CD4-positive, alpha-beta memory T cell (primary cell): ENCODE measurements at regions of chr6 and their contacts with region 1.

Region 1: GRCh38 chr6:31702819-31703522 is at the start of gene ABHD16A:
- DNase-seq: peak; percentile 96 to 98 (median 97)
- H3K4me3 ChIP-seq: peak within 1 kb of the TSS; percentile 70 to 82
- H3K4me3 Mint-ChIP-seq: peak within 1 kb of the TSS; percentile 97 to 99 (median 98)
- H3K27ac ChIP-seq: peak within 1 kb of the TSS; percentile 97
- H3K27ac Mint-ChIP-seq: peak within 1 kb of the TSS; percentile 93 to 99 (median 98)
- H3K4me1 ChIP-seq: peaks cover 28% of the 10 kb centered on the region
- H3K4me1 Mint-ChIP-seq: peaks cover 21 to 44% (median 34%) of the 10 kb centered on the region in 4 donors
- H3K27me3 ChIP-seq: no peaks in the 10 kb centered on the region
- H3K27me3 Mint-ChIP-seq: no peaks in the 10 kb centered on the region
- total RNA-seq, gene ABHD16A: 66.0 to 69.2 TPM

Region 2: GRCh38 chr6:31441365-31442267 is 261.4 kb before region 1 on chr6:
- CTCF ChIA-PET with region 1: no interaction called
- POLR2A ChIA-PET with region 1: no interaction called
- intact Hi-C with region 1: no loop called
- DNase-seq: peak; percentile 68 to 78 (median 75)
- H3K4me3 ChIP-seq: no peak overlapping the region
- H3K4me3 Mint-ChIP-seq: peak overlapping the region in 1 of 8 donors; percentile 33
- H3K27ac ChIP-seq: no peak overlapping the region
- H3K27ac Mint-ChIP-seq: peak overlapping the region in 2 of 7 donors; percentile 42 to 48
- H3K4me1 ChIP-seq: peaks cover 7% of the 10 kb centered on the region
- H3K4me1 Mint-ChIP-seq: peaks cover 0 to 8% (median under 1%) of the 10 kb centered on the region in 4 donors
- H3K27me3 ChIP-seq: peaks cover under 1% of the 10 kb centered on the region
- H3K27me3 Mint-ChIP-seq: peaks cover 25 to 27% of the 10 kb centered on the region in 2 donors

Region 3: DNA sequence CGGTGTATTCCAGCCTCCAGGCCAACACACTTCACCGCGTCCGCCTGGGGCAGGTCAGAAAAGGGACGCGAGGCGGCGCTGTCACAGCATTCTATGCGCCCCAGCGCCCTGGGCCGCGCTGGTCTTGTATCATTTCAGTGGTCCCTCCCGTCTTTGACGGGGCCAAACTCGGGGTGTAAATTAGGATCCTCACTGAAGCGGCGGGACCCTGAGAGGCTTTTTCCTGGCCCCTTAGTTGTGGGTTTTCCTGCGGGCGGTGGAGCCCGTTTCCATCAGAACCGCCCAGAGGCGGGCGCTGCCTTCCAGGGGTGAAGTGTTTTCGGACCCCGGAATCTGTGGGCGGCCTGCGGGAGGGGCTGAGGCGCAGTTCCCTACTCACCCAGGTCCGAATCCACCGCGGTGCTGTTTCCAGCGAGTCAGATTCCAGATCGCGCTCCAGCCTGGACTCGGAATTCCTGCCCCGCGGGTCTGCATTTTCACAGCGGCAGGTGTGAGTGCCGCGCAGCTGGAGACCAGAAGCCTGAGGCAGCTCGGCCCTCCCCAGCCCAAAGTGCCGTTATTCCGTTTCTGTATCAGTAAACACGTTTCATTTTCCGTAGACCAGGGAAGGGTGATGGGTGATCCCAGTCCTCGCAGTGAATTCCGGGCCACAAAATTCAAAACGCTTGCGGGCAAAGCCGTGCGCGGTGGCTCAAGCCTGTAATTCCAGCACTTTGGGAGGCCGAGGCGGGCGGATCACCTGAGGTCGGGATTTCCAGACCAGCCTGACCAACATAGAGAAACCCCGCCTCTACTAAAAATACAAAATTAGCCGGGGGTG is 208.9 kb before region 1 on chr6:
- CTCF ChIA-PET with region 1: no interaction called
- POLR2A ChIA-PET with region 1: no interaction called
- intact Hi-C with region 1: no loop called
- DNase-seq: peak; percentile 56 to 76 (median 73)
- H3K4me3 ChIP-seq: peak overlapping the region; percentile 71 to 91
- H3K4me3 Mint-ChIP-seq: peak overlapping the region; percentile 85 to 98 (median 91)
- H3K27ac ChIP-seq: peak overlapping the region; percentile 77
- H3K27ac Mint-ChIP-seq: peak overlapping the region; percentile 87 to 96 (median 95)
- H3K4me1 ChIP-seq: peaks cover 63% of the 10 kb centered on the region
- H3K4me1 Mint-ChIP-seq: peaks cover 35 to 69% (median 50%) of the 10 kb centered on the region in 4 donors
- H3K27me3 ChIP-seq: no peaks in the 10 kb centered on the region
- H3K27me3 Mint-ChIP-seq: no peaks in the 10 kb centered on the region

Region 4: GRCh38 chr6:31546962-31547726 is 155.8 kb before region 1 on chr6 and contains the start of gene NFKBIL1:
- CTCF ChIA-PET with region 1: no interaction called
- POLR2A ChIA-PET with region 1: interaction called, 3 read pairs
- intact Hi-C with region 1: loop called (anchors 1 kb)
- DNase-seq: peak; percentile 83 to 91 (median 85)
- H3K4me3 ChIP-seq: peak within 1 kb of the TSS; percentile 55 to 79
- H3K4me3 Mint-ChIP-seq: peak within 1 kb of the TSS; percentile 85 to 93 (median 88)
- H3K27ac ChIP-seq: peak within 1 kb of the TSS; percentile 85
- H3K27ac Mint-ChIP-seq: peak within 1 kb of the TSS; percentile 93 to 99 (median 97)
- H3K4me1 ChIP-seq: peaks cover 45% of the 10 kb centered on the region
- H3K4me1 Mint-ChIP-seq: peaks cover 24 to 49% (median 36%) of the 10 kb centered on the region in 4 donors
- H3K27me3 ChIP-seq: no peaks in the 10 kb centered on the region
- H3K27me3 Mint-ChIP-seq: no peaks in the 10 kb centered on the region
- total RNA-seq, gene NFKBIL1: 9.8 to 13.3 TPM

Region 5: GRCh38 chr6:31680840-31681671 is 21.9 kb before region 1 on chr6 and contains the start of gene LY6G5C:
- CTCF ChIA-PET with region 1: interaction called, 4 read pairs
- POLR2A ChIA-PET with region 1: interaction called, 13 read pairs
- intact Hi-C with region 1: loop called (anchors 2 kb)
- DNase-seq: peak in 4 of 5 donors; percentile 51 to 59 (median 56)
- H3K4me3 ChIP-seq: peak within 1 kb of the TSS; percentile 69 to 70
- H3K4me3 Mint-ChIP-seq: peak within 1 kb of the TSS; percentile 86 to 91 (median 90)
- H3K27ac ChIP-seq: peak within 1 kb of the TSS; percentile 51
- H3K27ac Mint-ChIP-seq: peak within 1 kb of the TSS; percentile 77 to 92 (median 86)
- H3K4me1 ChIP-seq: peaks cover 19% of the 10 kb centered on the region
- H3K4me1 Mint-ChIP-seq: peaks cover 11 to 27% (median 16%) of the 10 kb centered on the region in 4 donors
- H3K27me3 ChIP-seq: no peaks in the 10 kb centered on the region
- H3K27me3 Mint-ChIP-seq: no peaks in the 10 kb centered on the region
- total RNA-seq, gene LY6G5C: 4.4 to 4.5 TPM

Region 6: GRCh38 chr6:31729515-31729978 is 26.6 kb after region 1 on chr6:
- CTCF ChIA-PET with region 1: interaction called, 11 read pairs
- POLR2A ChIA-PET with region 1: interaction called, 15 read pairs
- intact Hi-C with region 1: no loop called
- DNase-seq: peak; percentile 72 to 83 (median 77)
- H3K4me3 ChIP-seq: peak overlapping the region; percentile 87 to 96
- H3K4me3 Mint-ChIP-seq: peak overlapping the region; percentile 94 to 98 (median 97)
- H3K27ac ChIP-seq: peak overlapping the region; percentile 68
- H3K27ac Mint-ChIP-seq: peak overlapping the region; percentile 89 to 97 (median 94)
- H3K4me1 ChIP-seq: peaks cover 65% of the 10 kb centered on the region
- H3K4me1 Mint-ChIP-seq: peaks cover 32 to 70% (median 47%) of the 10 kb centered on the region in 4 donors
- H3K27me3 ChIP-seq: no peaks in the 10 kb centered on the region
- H3K27me3 Mint-ChIP-seq: no peaks in the 10 kb centered on the region

Region 7: GRCh38 chr6:31795616-31796298 is 92.8 kb after region 1 on chr6 and contains the start of gene VARS1:
- CTCF ChIA-PET with region 1: no interaction called
- POLR2A ChIA-PET with region 1: interaction called, 12 read pairs
- intact Hi-C with region 1: no loop called
- DNase-seq: peak; percentile 83 to 90 (median 84)
- H3K4me3 ChIP-seq: peak within 1 kb of the TSS; percentile 72 to 96
- H3K4me3 Mint-ChIP-seq: peak within 1 kb of the TSS; percentile 94 to 99 (median 97)
- H3K27ac ChIP-seq: peak within 1 kb of the TSS; percentile 95
- H3K27ac Mint-ChIP-seq: peak within 1 kb of the TSS; percentile 63 to 99 (median 98)
- H3K4me1 ChIP-seq: peaks cover 55% of the 10 kb centered on the region
- H3K4me1 Mint-ChIP-seq: peaks cover 22 to 64% (median 37%) of the 10 kb centered on the region in 4 donors
- H3K27me3 ChIP-seq: no peaks in the 10 kb centered on the region
- H3K27me3 Mint-ChIP-seq: no peaks in the 10 kb centered on the region
- total RNA-seq, gene VARS1: 39.6 to 46.8 TPM

Region 8: GRCh38 chr6:31834434-31835198 is 131.6 kb after region 1 on chr6:
- CTCF ChIA-PET with region 1: interaction called, 8 read pairs
- POLR2A ChIA-PET with region 1: interaction called, 16 read pairs
- intact Hi-C with region 1: loop called (anchors 1 kb)
- DNase-seq: peak; percentile 80 to 84 (median 81)
- H3K4me3 ChIP-seq: peak overlapping the region; percentile 75 to 88
- H3K4me3 Mint-ChIP-seq: peak overlapping the region; percentile 88 to 99 (median 96)
- H3K27ac ChIP-seq: peak overlapping the region; percentile 88
- H3K27ac Mint-ChIP-seq: peak overlapping the region; percentile 97 to 99 (median 99)
- H3K4me1 ChIP-seq: peaks cover 61% of the 10 kb centered on the region
- H3K4me1 Mint-ChIP-seq: peaks cover 27 to 65% (median 48%) of the 10 kb centered on the region in 4 donors
- H3K27me3 ChIP-seq: no peaks in the 10 kb centered on the region
- H3K27me3 Mint-ChIP-seq: no peaks in the 10 kb centered on the region

Region 9: DNA sequence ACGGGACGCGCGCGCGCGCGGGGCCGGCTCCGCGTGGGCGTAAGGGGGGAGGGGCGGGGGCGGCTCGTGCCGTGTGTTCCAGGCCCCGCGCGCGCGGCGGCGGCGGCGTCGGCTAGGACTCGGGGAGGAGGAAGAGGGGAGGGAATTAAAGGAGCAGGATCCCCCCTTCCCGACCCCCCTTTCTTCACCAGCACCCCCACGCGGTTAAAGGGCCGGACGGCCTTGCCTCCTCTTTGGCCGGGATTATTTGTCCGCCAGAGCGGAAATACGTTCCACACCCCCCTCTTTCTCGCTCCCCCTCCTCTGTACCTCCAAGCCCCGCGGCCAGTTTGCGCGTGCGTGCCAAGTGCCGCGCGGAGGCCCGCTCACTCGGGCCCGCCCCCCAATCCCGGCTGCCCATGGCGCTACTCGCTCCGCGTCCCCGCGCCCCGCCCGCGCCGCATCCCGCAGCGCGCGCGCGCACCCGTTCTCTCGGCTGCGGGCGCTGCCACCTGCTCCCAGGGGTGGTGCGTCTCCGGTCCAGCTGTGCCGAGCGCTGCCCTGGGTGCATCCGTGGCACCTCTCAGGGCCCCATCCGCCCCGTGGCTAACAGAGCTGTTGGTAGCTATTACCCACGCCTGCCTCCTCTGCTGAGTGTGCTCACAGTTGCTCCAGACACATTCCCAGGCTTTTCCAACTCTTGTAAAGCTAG is 199.1 kb after region 1 on chr6 and contains the start of gene ZBTB12:
- CTCF ChIA-PET with region 1: no interaction called
- POLR2A ChIA-PET with region 1: interaction called, 5 read pairs
- intact Hi-C with region 1: loop called (anchors 1 kb)
- DNase-seq: peak; percentile 83 to 87 (median 86)
- H3K4me3 ChIP-seq: peak within 1 kb of the TSS; percentile 49 to 78
- H3K4me3 Mint-ChIP-seq: peak within 1 kb of the TSS; percentile 78 to 92 (median 90)
- H3K27ac ChIP-seq: peak within 1 kb of the TSS; percentile 58
- H3K27ac Mint-ChIP-seq: peak within 1 kb of the TSS; percentile 71 to 95 (median 89)
- H3K4me1 ChIP-seq: peaks cover 30% of the 10 kb centered on the region
- H3K4me1 Mint-ChIP-seq: peaks cover 17 to 36% (median 27%) of the 10 kb centered on the region in 4 donors
- H3K27me3 ChIP-seq: no peaks in the 10 kb centered on the region
- H3K27me3 Mint-ChIP-seq: peaks cover 0 to 1% of the 10 kb centered on the region in 2 donors
- total RNA-seq, gene ZBTB12: 2.4 to 2.5 TPM

Region 10: DNA sequence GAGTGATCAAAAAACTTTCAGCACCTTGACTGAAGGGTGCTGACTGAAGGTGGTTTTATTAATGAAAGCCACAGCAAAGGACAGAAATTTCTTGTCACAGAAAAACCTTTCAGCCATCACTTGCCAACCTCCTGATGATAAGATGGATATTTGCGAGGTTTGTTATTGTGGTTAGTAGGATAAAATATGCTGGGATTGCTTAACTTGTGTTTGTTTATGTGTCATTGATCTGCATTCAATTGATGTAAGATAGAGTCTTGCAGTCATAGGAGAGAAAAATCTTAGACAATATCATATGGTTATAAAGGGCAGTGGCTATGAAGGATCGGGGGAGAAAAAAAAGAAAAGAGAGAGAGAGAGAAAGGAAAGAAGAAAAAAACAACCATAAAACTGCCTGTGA is 667.5 kb after region 1 on chr6:
- CTCF ChIA-PET with region 1: no interaction called
- POLR2A ChIA-PET with region 1: no interaction called
- intact Hi-C with region 1: no loop called
- DNase-seq: no peak
- H3K4me3 ChIP-seq: no peak overlapping the region
- H3K4me3 Mint-ChIP-seq: no peak overlapping the region
- H3K27ac ChIP-seq: no peak overlapping the region
- H3K27ac Mint-ChIP-seq: no peak overlapping the region
- H3K4me1 ChIP-seq: no peaks in the 10 kb centered on the region
- H3K4me1 Mint-ChIP-seq: no peaks in the 10 kb centered on the region
- H3K27me3 ChIP-seq: peaks cover 5% of the 10 kb centered on the region
- H3K27me3 Mint-ChIP-seq: peaks cover 29 to 30% of the 10 kb centered on the region in 2 donors